ENCODE measurements at regions of chrX and their contacts with region 1.

Region 1: GRCh38 chrX:106481341-106481740 is 130.4 kb upstream of the RADX start:
- DNase-seq: peak; percentile 11 to 43 (median 34)
- ATAC-seq: peak; percentile 49; the same call in 1 of the 3 replicates
- H3K4me3 ChIP-seq: no peak overlapping the region
- H3K27ac ChIP-seq: no peak overlapping the region
- H3K4me1 ChIP-seq: no peaks in the 10 kb centered on the region
- H3K27me3 ChIP-seq: no peaks in the 10 kb centered on the region
- CTCF ChIP-seq: peak; percentile 45 to 58 (median 48)
- EP300 ChIP-seq: no peak
- POLR2A ChIP-seq: no peak
- RAD21 ChIP-seq: peak; percentile 38 to 63

Region 2: GRCh38 chrX:106791495-106791894 is 310.2 kb after region 1 on chrX:
- CTCF ChIA-PET with region 1: interaction called, 6 read pairs
- POLR2A ChIA-PET with region 1: no interaction called
- in situ Hi-C with region 1: no loop called
- intact Hi-C with region 1: loop called (anchors 2 kb)
- DNase-seq: no peak
- ATAC-seq: no peak
- H3K4me3 ChIP-seq: no peak overlapping the region
- H3K27ac ChIP-seq: no peak overlapping the region
- H3K4me1 ChIP-seq: no peaks in the 10 kb centered on the region
- H3K27me3 ChIP-seq: no peaks in the 10 kb centered on the region
- CTCF ChIP-seq: peak in 1 of 3 experiments; percentile 22; a peak in 1 of 6 replicates
- EP300 ChIP-seq: no peak
- POLR2A ChIP-seq: no peak
- RAD21 ChIP-seq: peak in 1 of 2 experiments; percentile 30; a peak in 2 of 4 replicates

Measured in K562 (cell line).